ENCODE measurements at regions of chr10 and their contacts with region 1.

Region 1: GRCh38 chr10:113521123-113521795 is 31.6 kb upstream of the HABP2 start:
- DNase-seq: peak; percentile 73 to 75
- ATAC-seq: peak; percentile 69 to 89
- H3K4me3 ChIP-seq: no peak overlapping the region
- H3K27ac ChIP-seq: no peak overlapping the region
- H3K4me1 ChIP-seq: no peaks in the 10 kb centered on the region
- CTCF ChIP-seq: peak; percentile 93
- EP300 ChIP-seq: no peak
- POLR2A ChIP-seq: no peak
- RAD21 ChIP-seq: peak; percentile 93 to 95

Region 2: GRCh38 chr10:112471878-112472487 is 1049.3 kb before region 1 on chr10:
- CTCF ChIA-PET with region 1: interaction called, 12 read pairs
- POLR2A ChIA-PET with region 1: no interaction called
- DNase-seq: peak; percentile 55 to 71
- ATAC-seq: peak; percentile 79 to 85
- H3K4me3 ChIP-seq: no peak overlapping the region
- H3K27ac ChIP-seq: peak overlapping the region in 1 of 2 experiments; percentile 42; a peak in 2 of 6 replicates
- H3K4me1 ChIP-seq: peaks cover 14% of the 10 kb centered on the region; the same call in 2 of the 3 replicates
- CTCF ChIP-seq: peak; percentile 89
- EP300 ChIP-seq: no peak
- POLR2A ChIP-seq: no peak
- RAD21 ChIP-seq: peak; percentile 74

Region 3: GRCh38 chr10:113534423-113534822 is 13.2 kb after region 1 on chr10:
- CTCF ChIA-PET with region 1: interaction called, 17 read pairs
- POLR2A ChIA-PET with region 1: no interaction called
- DNase-seq: no peak
- ATAC-seq: no peak
- H3K4me3 ChIP-seq: no peak overlapping the region
- H3K27ac ChIP-seq: no peak overlapping the region
- H3K4me1 ChIP-seq: peaks cover 5% of the 10 kb centered on the region; the same call in 1 of the 3 replicates
- CTCF ChIP-seq: no peak
- EP300 ChIP-seq: no peak
- POLR2A ChIP-seq: no peak
- RAD21 ChIP-seq: no peak

Region 4: GRCh38 chr10:113563306-113564088 is 42.2 kb after region 1 on chr10:
- CTCF ChIA-PET with region 1: interaction called, 39 read pairs
- POLR2A ChIA-PET with region 1: no interaction called
- DNase-seq: peak; percentile 65 to 83
- ATAC-seq: peak; percentile 96 to 97
- H3K4me3 ChIP-seq: peak overlapping the region; percentile 30
- H3K27ac ChIP-seq: peak overlapping the region; percentile 9 to 70; a peak in 4 of 6 replicates
- H3K4me1 ChIP-seq: no peaks in the 10 kb centered on the region
- CTCF ChIP-seq: peak; percentile 92
- EP300 ChIP-seq: no peak
- POLR2A ChIP-seq: no peak
- RAD21 ChIP-seq: peak; percentile 89 to 93